ENCODE measurements at regions of chr6 and their contacts with region 1.

Region 1: GRCh38 chr6:148760568-148761526 is 14.0 kb downstream of the UST start:
- DNase-seq: peak in 12 of 14 experiments; percentile 11 to 77 (median 36)
- ATAC-seq: peak; percentile 62
- H3K4me3 ChIP-seq: peak overlapping the region; percentile 51
- H3K4me3 Mint-ChIP-seq: peak overlapping the region; percentile 63
- H3K27ac ChIP-seq: peak overlapping the region; percentile 78 to 95
- H3K27ac Mint-ChIP-seq: peak overlapping the region; percentile 84
- H3K4me1 ChIP-seq: peaks cover 41% of the 10 kb centered on the region
- H3K4me1 Mint-ChIP-seq: peaks cover 64% of the 10 kb centered on the region
- H3K27me3 ChIP-seq: no peaks in the 10 kb centered on the region
- H3K27me3 Mint-ChIP-seq: no peaks in the 10 kb centered on the region
- CTCF ChIP-seq: no peak

Region 2: GRCh38 chr6:148771205-148771601 is 10.4 kb after region 1 on chr6:
- CTCF ChIA-PET with region 1: interaction called, 4 read pairs
- POLR2A ChIA-PET with region 1: interaction called, 34 read pairs
- intact Hi-C with region 1: no loop called
- DNase-seq: no peak
- ATAC-seq: peak; percentile 69
- H3K4me3 ChIP-seq: no peak overlapping the region
- H3K4me3 Mint-ChIP-seq: peak overlapping the region; percentile 32
- H3K27ac ChIP-seq: no peak overlapping the region
- H3K27ac Mint-ChIP-seq: peak overlapping the region; percentile 18
- H3K4me1 ChIP-seq: peaks cover 26% of the 10 kb centered on the region
- H3K4me1 Mint-ChIP-seq: peaks cover 38% of the 10 kb centered on the region
- H3K27me3 ChIP-seq: no peaks in the 10 kb centered on the region
- H3K27me3 Mint-ChIP-seq: no peaks in the 10 kb centered on the region
- CTCF ChIP-seq: no peak

Region 3: DNA sequence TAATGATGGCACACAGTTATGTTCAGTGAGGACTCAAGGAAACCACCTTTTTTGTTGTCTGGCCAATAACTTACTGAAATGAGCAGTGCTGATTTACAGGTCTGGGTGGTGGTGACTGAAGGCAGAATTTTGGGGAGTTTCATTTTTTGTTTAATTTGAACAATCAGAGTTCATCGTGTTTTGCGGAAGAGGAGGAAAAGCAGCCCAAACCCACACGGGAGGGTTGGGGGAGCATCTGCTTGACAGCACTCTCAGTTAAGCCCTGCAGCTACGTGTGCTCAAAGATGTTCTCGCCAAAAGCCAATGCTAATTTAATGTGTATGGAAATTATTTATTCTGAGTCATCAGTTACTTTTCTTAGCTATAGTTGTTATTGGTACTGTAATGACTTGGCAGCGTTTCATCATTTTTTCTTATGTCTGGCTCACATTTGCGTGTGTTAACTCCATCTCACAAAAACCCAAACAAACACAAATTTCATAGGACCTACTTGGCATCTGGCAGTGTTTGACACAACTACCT is 75.1 kb after region 1 on chr6:
- CTCF ChIA-PET with region 1: no interaction called
- POLR2A ChIA-PET with region 1: no interaction called
- intact Hi-C with region 1: loop called in 1 of 2 experiments (anchors 5 kb)
- DNase-seq: peak in 4 of 14 experiments; percentile 4 to 16 (median 14)
- ATAC-seq: peak; percentile 39
- H3K4me3 ChIP-seq: no peak overlapping the region
- H3K4me3 Mint-ChIP-seq: peak overlapping the region; percentile 55
- H3K27ac ChIP-seq: no peak overlapping the region
- H3K27ac Mint-ChIP-seq: peak overlapping the region; percentile 43
- H3K4me1 ChIP-seq: peaks cover 4% of the 10 kb centered on the region
- H3K4me1 Mint-ChIP-seq: peaks cover 17% of the 10 kb centered on the region
- H3K27me3 ChIP-seq: no peaks in the 10 kb centered on the region
- H3K27me3 Mint-ChIP-seq: no peaks in the 10 kb centered on the region
- CTCF ChIP-seq: no peak

Region 4: DNA sequence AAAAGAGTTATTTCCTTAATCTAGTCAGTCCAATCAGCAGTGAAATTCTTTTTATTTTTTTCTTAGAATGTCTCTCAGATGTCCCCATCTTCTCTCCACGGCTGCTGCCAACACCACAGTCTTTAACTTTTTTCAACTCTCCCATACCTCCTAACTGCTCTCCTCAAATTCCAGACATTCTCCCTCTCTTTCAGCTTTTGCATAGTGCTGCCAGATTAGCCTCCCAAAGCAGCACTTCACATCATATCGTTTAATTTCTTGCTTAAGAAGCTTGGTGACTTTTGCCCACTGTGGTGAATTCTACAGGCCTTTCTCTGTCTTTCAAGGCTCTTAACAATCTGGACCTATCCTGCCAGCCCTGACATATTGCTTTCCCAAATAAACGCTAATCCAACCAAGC is 219.4 kb after region 1 on chr6:
- CTCF ChIA-PET with region 1: no interaction called
- POLR2A ChIA-PET with region 1: no interaction called
- intact Hi-C with region 1: no loop called
- DNase-seq: no peak
- ATAC-seq: no peak
- H3K4me3 ChIP-seq: no peak overlapping the region
- H3K4me3 Mint-ChIP-seq: no peak overlapping the region
- H3K27ac ChIP-seq: no peak overlapping the region
- H3K27ac Mint-ChIP-seq: no peak overlapping the region
- H3K4me1 ChIP-seq: no peaks in the 10 kb centered on the region
- H3K4me1 Mint-ChIP-seq: no peaks in the 10 kb centered on the region
- H3K27me3 ChIP-seq: no peaks in the 10 kb centered on the region
- H3K27me3 Mint-ChIP-seq: no peaks in the 10 kb centered on the region
- CTCF ChIP-seq: no peak